ENCODE measurements at regions of chr7 and their contacts with region 1.

Region 1: GRCh38 chr7:18265611-18266281 is 229.8 kb upstream of the HDAC9 start:
- DNase-seq: no peak
- ATAC-seq: no peak
- H3K4me3 ChIP-seq: no peak overlapping the region
- H3K27ac ChIP-seq: no peak overlapping the region
- H3K4me1 ChIP-seq: no peaks in the 10 kb centered on the region
- H3K27me3 ChIP-seq: no peaks in the 10 kb centered on the region
- CTCF ChIP-seq: no peak
- POLR2A ChIP-seq: no peak
- RAD21 ChIP-seq: no peak

Region 2: DNA sequence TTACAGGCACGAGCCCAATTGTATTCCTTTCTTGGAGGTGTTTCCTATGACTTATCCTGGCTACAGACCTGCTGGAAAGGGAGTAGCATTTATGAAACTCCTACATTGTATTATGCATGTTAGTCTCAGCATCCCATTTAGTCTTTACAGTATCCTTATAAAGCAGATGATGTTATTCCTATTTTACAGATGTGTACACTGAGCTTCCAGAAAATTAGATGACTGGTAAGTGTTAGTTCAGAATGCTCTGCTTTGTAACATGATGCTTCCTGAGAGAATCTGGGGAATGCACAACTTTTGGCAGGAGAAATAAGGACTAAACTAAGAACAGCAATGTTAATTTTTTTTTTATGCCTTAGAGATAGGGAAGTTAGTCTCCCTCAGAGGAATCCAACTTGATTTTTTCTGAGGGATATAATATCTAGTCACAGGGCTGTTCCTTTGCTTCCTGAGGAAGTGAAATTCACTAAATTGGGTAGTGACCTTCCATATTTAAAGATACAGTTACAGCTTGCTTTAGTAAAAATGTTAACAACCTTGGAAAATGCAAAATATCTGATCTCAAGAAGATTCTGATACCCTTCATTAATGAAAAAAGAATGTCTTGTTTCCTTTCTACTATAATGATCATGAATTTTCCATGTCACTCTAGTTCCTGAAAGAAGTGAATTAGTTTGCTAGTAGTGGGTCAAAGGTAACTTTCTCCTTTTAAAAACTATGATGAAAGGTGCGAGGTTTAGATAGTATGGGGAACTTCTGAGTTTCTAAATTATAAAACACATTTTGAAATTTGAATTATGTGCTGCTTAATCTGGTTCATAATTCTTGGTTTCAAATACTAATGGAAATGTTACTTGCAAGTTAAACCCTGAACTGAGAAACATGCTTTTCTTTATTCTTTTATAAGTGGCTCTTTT is 44.1 kb before region 1 on chr7:
- CTCF ChIA-PET with region 1: no interaction called
- POLR2A ChIA-PET with region 1: no interaction called
- dilution Hi-C with region 1: no loop called
- in situ Hi-C with region 1: no loop called
- intact Hi-C with region 1: loop called (anchors 5 kb)
- DNase-seq: peak; percentile 10
- ATAC-seq: no peak
- H3K4me3 ChIP-seq: no peak overlapping the region
- H3K27ac ChIP-seq: no peak overlapping the region
- H3K4me1 ChIP-seq: no peaks in the 10 kb centered on the region
- H3K27me3 ChIP-seq: no peaks in the 10 kb centered on the region
- CTCF ChIP-seq: no peak
- POLR2A ChIP-seq: no peak
- RAD21 ChIP-seq: no peak

Region 3: GRCh38 chr7:18547509-18548187 is 281.9 kb after region 1 on chr7:
- CTCF ChIA-PET with region 1: no interaction called
- POLR2A ChIA-PET with region 1: no interaction called
- dilution Hi-C with region 1: no loop called
- in situ Hi-C with region 1: no loop called
- intact Hi-C with region 1: no loop called
- DNase-seq: no peak
- ATAC-seq: no peak
- H3K4me3 ChIP-seq: no peak overlapping the region
- H3K27ac ChIP-seq: no peak overlapping the region
- H3K4me1 ChIP-seq: no peaks in the 10 kb centered on the region
- H3K27me3 ChIP-seq: no peaks in the 10 kb centered on the region
- CTCF ChIP-seq: no peak
- POLR2A ChIP-seq: no peak
- RAD21 ChIP-seq: no peak

Measured in IMR-90 (cell line).